ENCODE measurements at regions of chr5 and their contacts with region 1.

Region 1: DNA sequence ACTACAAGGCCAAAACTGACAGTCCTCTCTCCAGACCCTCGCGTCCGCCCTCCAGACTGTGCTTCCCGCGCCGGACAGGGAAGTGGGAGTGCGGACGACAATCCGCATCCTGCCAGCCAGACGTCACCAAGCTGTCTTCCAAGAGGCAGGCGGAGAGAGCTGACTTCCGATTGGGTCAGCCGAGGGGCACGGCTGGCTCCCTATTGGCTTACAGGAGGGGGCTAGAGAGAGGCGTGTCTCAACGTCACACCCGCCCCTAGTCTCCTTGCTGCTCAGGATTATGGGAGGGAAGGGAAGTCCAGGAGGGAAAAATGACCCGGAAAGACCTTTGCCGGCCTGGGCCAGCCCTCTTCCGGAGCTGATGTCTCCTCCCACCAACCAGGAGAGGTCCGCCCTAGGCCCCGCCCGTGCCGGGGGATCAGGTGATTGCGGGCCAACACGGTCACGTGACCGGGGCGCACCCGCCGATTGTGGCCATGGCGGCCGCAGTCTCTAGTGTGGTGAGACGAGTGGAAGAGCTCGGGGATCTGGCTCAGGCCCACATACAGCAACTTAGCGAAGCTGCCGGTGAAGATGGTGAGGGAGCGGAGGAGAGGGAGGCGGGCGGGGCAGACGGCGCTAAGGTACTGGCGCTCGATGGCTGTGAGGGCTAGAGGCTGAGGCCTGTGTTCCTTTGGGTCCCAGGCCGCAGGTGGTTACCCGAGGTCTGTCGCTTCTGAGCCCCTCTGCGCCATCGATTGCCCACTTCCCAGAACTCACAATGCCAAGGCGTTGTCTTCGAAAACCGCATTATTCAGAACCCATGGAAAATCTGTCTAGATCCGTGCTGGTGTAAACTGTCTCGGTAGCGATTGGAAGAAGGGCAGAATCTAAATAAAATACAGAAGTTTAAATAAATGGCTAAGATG is at the start of gene RIMOC1:
- DNase-seq: peak; percentile 99
- H3K4me3 ChIP-seq: peak within 1 kb of the TSS; percentile 82 to 97 (median 84)
- H3K27ac ChIP-seq: peak within 1 kb of the TSS; percentile 87
- H3K4me1 ChIP-seq: peaks cover 17% of the 10 kb centered on the region
- H3K27me3 ChIP-seq: no peaks in the 10 kb centered on the region
- CTCF ChIP-seq: no peak
- total RNA-seq, gene RIMOC1: 16.7 to 31.5 TPM

Region 2: DNA sequence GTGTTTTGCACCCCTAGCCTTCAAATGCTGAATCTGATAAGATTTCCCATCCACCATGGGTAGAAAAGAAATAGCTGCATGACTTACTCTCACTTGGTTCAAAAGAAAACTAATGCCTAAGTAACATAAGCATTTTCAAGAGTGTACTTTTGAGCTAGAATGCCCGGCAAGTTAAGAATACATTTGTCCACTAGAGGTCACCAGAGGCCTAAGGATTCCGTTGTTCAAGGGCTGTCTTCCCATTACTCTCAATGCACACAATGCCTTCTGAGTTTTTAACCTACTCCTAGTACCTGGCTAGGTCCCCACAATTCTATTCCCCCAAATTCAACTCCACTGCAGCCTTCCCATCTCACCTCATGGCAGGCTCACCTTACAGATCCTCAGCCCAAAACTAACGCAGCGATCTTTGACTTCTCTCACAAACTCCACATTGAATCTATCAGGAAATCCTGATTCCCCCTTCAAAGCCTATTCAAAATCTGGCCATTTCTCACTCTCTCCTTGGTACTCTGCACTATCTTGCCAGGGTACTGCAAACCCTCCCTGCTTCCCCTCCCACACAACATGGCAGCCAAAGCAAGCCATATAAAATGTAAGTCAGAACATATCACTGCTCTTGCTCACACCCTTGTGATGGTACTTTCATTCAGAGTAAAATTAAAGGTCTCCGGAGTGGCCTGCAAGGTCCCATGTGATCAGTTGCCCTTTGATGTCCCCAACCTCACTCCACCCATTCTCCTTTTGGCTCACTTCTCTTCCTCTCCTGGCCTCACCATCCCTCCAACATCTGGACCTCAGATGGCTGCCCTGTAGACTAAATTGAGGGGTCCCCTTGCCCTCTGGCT is 47.3 kb before region 1 on chr5:
- CTCF ChIA-PET with region 1: no interaction called
- dilution Hi-C with region 1: no loop called
- in situ Hi-C with region 1: no loop called
- intact Hi-C with region 1: loop called (anchors 10 kb)
- DNase-seq: peak; percentile 47
- H3K4me3 ChIP-seq: no peak overlapping the region
- H3K27ac ChIP-seq: no peak overlapping the region
- H3K4me1 ChIP-seq: no peaks in the 10 kb centered on the region
- H3K27me3 ChIP-seq: no peaks in the 10 kb centered on the region
- CTCF ChIP-seq: peak; percentile 74 to 78

Region 3: GRCh38 chr5:41878643-41879478 is 25.3 kb before region 1 on chr5:
- CTCF ChIA-PET with region 1: no interaction called
- dilution Hi-C with region 1: no loop called
- in situ Hi-C with region 1: no loop called
- intact Hi-C with region 1: no loop called
- DNase-seq: no peak
- H3K4me3 ChIP-seq: no peak overlapping the region
- H3K27ac ChIP-seq: no peak overlapping the region
- H3K4me1 ChIP-seq: no peaks in the 10 kb centered on the region
- H3K27me3 ChIP-seq: no peaks in the 10 kb centered on the region
- CTCF ChIP-seq: no peak